PC-3 (cell line): ENCODE measurements at regions of chr15 and their contacts with region 1.

Region 1: DNA sequence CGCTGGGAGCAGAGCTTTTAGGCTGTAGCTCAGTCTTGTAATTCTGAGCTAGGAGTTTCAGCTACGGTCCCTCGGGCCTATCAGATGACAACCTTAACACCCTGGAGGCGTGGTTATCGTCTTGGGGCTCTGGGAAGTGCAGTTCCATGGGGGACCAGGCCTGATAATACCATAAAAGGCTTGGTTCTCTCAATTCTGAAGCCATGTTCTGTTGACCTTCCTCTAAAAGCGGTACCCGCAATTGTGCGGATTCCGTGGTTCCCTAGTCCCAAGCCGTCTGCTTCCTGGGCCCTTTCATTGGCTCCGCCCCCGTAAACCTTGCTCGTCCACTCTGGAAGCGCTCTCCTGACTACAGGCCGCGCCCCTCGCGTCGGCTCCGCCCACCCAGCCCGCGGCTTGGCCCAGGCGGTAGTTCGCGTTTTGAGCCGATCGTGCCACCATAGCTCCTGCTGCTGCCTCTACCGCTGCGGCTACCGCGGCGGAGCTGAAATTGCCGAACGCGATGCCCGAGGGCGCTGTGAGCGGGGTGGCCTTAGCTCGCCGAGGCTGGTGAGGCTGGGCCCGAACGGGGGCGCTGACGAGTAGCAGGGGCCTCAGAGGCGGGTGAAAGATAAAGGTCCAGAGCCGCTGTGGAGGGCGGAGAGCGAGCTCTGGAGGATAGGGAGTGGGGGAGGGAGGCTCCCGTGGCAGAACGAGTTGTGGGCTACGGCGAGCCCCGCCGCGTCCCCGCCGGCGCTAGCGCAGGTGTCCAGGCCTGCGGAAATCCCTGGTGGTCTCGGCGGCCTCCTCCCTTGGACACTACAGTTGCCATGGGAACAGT is at the start of gene MAPKBP1:
- DNase-seq: peak; percentile 98
- ATAC-seq: peak; percentile 82
- H3K4me3 ChIP-seq: peak within 1 kb of the TSS; percentile 81
- H3K27ac ChIP-seq: peak within 1 kb of the TSS; percentile 46
- H3K4me1 ChIP-seq: peaks cover 51% of the 10 kb centered on the region
- H3K27me3 ChIP-seq: no peaks in the 10 kb centered on the region
- CTCF ChIP-seq: peak; percentile 85
- total RNA-seq, gene MAPKBP1: 23.8 and 29.1 TPM in 2 replicates

Region 2: DNA sequence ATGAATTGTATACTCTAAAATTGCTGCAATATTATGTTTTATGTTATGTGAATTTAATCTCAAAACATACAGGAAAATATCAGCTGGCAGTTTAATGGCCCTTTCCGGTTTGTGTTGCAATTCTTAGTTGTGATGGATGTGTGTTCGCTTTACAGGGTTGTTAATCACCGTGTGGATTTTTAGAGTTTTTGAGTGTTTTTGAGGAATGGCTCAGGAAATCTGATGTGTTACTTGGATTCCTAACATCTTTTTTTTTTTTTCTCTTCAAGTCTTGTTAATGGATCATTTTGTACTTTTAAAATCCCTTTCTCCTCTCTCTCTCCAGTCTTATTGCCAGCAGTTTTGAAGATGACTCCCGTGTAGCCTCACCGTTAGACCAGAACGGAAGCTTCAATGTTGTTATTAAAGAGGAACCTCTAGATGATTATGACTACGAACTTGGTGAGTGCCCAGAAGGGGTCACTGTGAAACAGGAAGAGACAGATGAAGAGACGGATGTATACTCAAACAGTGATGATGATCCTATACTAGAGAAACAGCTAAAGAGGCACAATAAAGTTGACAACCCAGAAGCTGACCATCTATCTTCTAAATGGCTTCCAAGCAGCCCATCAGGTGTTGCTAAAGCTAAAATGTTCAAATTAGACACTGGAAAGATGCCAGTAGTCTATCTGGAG is 78.4 kb before region 1 on chr15:
- CTCF ChIA-PET with region 1: interaction called, 11 read pairs
- POLR2A ChIA-PET with region 1: interaction called, 3 read pairs
- intact Hi-C with region 1: loop called (anchors 1 kb)
- DNase-seq: peak; percentile 68
- ATAC-seq: peak; percentile 52
- H3K4me3 ChIP-seq: no peak overlapping the region
- H3K27ac ChIP-seq: no peak overlapping the region
- H3K4me1 ChIP-seq: peaks cover 15% of the 10 kb centered on the region
- H3K27me3 ChIP-seq: no peaks in the 10 kb centered on the region
- CTCF ChIP-seq: peak; percentile 77

Region 3: GRCh38 chr15:41790756-41791546 is 16.7 kb after region 1 on chr15:
- CTCF ChIA-PET with region 1: interaction called, 6 read pairs
- POLR2A ChIA-PET with region 1: interaction called, 7 read pairs
- intact Hi-C with region 1: loop called (anchors 2 kb)
- DNase-seq: peak; percentile 90
- ATAC-seq: peak; percentile 91
- H3K4me3 ChIP-seq: peak overlapping the region; percentile 6; the same call in 1 of the 2 replicates
- H3K27ac ChIP-seq: peak overlapping the region; percentile 84
- H3K4me1 ChIP-seq: peaks cover 38% of the 10 kb centered on the region
- H3K27me3 ChIP-seq: no peaks in the 10 kb centered on the region
- CTCF ChIP-seq: no peak

Region 4: GRCh38 chr15:41806291-41807181 is 32.3 kb after region 1 on chr15:
- CTCF ChIA-PET with region 1: interaction called, 76 read pairs
- POLR2A ChIA-PET with region 1: interaction called, 15 read pairs
- intact Hi-C with region 1: loop called (anchors 1 kb)
- DNase-seq: peak; percentile 75
- ATAC-seq: no peak
- H3K4me3 ChIP-seq: no peak overlapping the region
- H3K27ac ChIP-seq: no peak overlapping the region
- H3K4me1 ChIP-seq: peaks cover 35% of the 10 kb centered on the region
- H3K27me3 ChIP-seq: no peaks in the 10 kb centered on the region
- CTCF ChIP-seq: peak; percentile 48

Region 5: DNA sequence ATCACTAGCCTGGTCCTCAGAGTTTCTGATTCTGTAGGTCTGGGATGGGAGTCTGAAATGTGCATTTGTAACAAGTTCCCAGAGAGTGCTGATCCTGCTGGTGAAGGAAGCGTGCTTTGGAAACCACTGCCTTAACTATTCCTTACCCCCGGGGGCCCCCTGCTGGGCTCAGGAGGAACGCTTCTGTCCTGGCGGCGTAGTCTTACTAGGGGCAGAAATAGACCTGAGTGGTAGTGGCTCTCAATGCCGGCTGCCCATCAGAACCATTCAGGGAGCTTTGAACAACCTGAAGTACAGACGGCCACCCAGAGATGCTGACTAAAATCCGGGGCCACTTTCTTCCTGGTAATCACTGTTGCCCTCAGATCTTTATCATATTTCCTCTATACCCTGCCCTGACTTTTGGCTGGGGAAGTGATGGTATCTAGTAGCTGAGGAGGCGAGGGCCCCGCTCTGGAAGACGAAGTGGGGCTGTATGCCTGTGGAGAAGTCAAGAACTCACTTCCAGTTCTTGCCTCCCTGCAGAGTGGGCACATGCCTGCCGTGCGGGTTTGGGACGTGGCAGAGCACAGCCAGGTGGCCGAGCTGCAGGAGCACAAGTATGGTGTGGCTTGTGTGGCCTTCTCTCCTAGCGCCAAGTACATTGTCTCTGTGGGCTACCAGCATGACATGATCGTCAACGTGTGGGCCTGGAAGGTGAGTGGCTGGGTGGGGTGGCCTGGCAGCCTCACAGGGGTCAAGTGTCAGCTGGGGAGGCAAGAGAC is 37.3 kb after region 1 on chr15:
- CTCF ChIA-PET with region 1: interaction called, 76 read pairs
- POLR2A ChIA-PET with region 1: interaction called, 15 read pairs
- intact Hi-C with region 1: loop called (anchors 1 kb)
- DNase-seq: peak; percentile 89
- ATAC-seq: peak; percentile 96
- H3K4me3 ChIP-seq: no peak overlapping the region
- H3K27ac ChIP-seq: no peak overlapping the region
- H3K4me1 ChIP-seq: peaks cover 14% of the 10 kb centered on the region
- H3K27me3 ChIP-seq: no peaks in the 10 kb centered on the region
- CTCF ChIP-seq: peak; percentile 94

Region 6: DNA sequence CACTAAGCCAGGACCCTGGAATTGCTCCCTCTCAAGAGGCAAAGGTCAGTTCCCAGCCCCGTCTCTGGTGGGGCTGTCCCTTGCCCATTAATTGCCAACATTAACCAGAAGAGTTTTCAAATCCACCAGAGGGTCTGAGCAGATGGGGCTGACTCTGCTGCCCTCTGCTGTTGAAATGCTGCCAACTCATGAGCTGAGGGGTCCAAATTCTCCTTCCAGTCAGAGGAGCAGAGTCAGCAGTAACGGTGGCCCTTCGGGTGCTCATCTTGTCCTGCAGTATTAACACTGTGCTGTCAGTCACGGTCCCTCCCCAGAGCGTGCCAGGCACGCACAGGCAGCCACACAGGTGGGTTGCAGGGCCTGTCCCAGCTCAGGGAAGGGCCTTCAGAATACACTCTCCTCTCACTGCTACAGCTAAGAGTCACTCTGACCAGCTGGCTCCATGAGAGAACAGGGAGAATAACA is 130.3 kb after region 1 on chr15:
- CTCF ChIA-PET with region 1: interaction called, 16 read pairs
- POLR2A ChIA-PET with region 1: no interaction called
- intact Hi-C with region 1: loop called (anchors 5 kb)
- DNase-seq: peak; percentile 79
- ATAC-seq: peak; percentile 85
- H3K4me3 ChIP-seq: no peak overlapping the region
- H3K27ac ChIP-seq: no peak overlapping the region
- H3K4me1 ChIP-seq: no peaks in the 10 kb centered on the region
- H3K27me3 ChIP-seq: no peaks in the 10 kb centered on the region
- CTCF ChIP-seq: peak; percentile 91

Region 7: DNA sequence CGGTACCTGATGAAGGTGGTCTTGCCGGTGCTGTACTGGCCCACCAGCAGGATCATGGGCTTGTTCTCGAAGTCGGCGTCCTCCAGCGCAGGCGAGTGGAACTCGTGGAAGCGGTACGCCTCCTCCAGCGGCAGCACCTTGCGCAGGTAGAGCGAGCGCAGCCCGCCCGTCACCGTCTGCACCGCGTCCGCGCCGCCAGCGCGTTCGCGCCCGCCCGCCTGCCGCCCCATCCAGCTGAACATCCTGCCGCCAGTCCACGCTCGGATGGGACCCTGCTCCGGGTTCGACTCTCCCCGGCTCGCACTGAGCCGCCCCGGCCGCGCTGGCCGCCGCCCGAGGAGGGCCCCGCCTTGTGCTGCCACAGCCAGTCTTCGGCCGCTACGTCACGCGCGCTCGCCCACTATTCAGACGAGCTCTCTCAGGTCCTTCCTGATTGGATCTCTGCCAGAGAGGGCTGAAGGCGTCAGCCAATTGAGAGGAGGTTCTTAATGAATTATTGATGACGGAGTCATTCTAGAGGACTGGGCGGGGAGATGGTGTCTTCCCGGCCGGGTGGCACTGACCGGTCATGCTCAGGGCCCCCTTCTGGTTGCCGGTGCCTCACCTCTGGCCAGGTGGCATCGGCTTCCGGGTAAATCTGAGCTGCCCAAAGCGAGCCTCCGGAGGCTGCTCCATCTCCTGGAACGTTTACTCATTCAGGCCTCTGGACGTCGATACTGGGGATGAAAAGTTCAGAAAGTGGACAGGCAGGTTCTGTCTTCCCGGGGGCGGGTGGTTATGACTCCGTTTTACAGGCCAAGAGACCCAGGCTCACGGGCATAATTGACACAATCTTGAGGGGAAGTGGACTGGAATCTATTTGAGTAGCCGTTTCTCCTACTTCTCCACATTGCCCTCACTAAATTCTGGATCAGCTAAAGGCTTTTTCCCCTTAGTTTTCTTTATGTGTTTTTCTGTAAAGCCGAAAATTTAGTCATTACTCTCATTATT is 198.3 kb after region 1 on chr15 and contains the start of gene EHD4:
- CTCF ChIA-PET with region 1: no interaction called
- POLR2A ChIA-PET with region 1: no interaction called
- intact Hi-C with region 1: loop called (anchors 5 kb)
- DNase-seq: peak; percentile 100
- ATAC-seq: peak; percentile 90
- H3K4me3 ChIP-seq: peak within 1 kb of the TSS; percentile 87
- H3K27ac ChIP-seq: peak within 1 kb of the TSS; percentile 79
- H3K4me1 ChIP-seq: peaks cover 30% of the 10 kb centered on the region
- H3K27me3 ChIP-seq: no peaks in the 10 kb centered on the region
- CTCF ChIP-seq: peak; percentile 61
- total RNA-seq, gene EHD4: 57.8 and 66.9 TPM in 2 replicates

Region 8: DNA sequence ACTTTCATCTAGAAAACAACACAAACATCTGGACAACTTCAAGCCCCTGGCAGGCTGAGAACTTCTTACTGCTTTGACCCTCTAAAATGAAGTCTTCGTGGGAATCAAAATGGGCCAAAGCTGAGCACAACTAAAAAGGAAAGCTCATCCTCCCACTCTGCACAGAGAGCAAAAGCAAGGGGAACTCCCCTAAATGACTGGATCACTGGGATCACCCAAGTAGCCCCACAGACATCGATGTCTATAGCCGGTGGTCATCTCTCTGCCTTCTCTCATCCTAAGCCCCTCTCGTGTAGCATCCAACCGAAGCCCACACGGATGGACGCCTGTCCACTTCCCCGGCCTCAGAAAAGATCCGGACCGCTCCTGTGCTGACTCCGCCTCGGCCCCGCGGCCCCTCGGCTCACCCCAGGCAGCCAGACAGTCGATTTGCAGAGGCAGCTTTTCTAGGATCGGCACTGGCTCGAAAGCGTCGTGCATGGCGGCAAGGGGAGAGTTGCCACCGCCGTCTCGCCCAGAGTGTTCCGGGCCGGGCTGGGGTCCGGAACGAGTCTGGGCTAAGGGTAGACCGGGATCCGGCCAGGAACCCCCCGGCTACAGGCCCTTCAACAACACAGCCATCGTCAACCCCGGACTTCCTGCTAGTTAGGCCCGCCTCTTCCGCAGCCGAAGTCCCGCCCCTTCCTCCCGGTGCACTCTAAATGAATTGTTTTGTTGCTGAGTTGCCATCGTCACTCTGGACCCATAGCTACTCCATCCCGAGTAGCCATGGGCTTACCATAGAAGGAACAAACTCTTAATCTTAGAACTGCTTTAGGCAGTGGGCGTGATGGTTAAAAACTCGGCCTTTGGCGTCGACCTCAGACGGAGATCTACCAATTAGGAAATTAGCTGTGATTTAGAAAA is 433.7 kb after region 1 on chr15 and contains the start of gene VPS39:
- CTCF ChIA-PET with region 1: no interaction called
- POLR2A ChIA-PET with region 1: no interaction called
- intact Hi-C with region 1: no loop called
- DNase-seq: peak; percentile 83
- ATAC-seq: peak; percentile 95
- H3K4me3 ChIP-seq: peak within 1 kb of the TSS; percentile 98
- H3K27ac ChIP-seq: peak within 1 kb of the TSS; percentile 22
- H3K4me1 ChIP-seq: peaks cover 24% of the 10 kb centered on the region
- H3K27me3 ChIP-seq: no peaks in the 10 kb centered on the region
- CTCF ChIP-seq: no peak
- total RNA-seq, gene VPS39: 28.5 and 46.4 TPM in 2 replicates